Testis (tissue), 5 donors: ENCODE measurements at regions of chr6 and their contacts with region 1.

Region 1: GRCh38 chr6:33147807-33148666 is 44.2 kb downstream of the COL11A2 start:
- DNase-seq: peak; percentile 63
- H3K4me3 ChIP-seq: no peak overlapping the region
- H3K27ac ChIP-seq: no peak overlapping the region
- H3K4me1 ChIP-seq: no peaks in the 10 kb centered on the region
- H3K27me3 ChIP-seq: no peaks in the 10 kb centered on the region
- CTCF ChIP-seq: peak; percentile 64 to 83 (median 69)
- POLR2A ChIP-seq: no peak

Region 2: DNA sequence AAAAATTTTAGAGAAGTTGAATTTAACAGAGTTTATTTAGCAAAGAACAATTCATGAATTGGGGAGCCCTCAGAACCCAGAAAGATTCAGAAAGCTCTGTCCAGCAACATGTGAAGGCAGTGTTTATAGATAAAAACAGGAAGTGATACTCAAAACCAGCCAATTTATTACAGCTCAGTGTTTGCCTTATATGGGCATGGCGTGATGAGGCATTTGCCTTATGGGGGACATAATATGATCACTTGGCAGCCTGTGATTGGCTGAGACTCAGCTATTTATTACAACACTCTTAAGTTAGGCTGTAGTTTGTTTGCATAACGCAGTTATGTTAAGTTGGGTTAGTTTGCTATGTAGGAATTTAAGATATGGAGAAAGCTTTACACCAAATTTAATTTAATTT is 86.0 kb before region 1 on chr6:
- intact Hi-C with region 1: no loop called
- DNase-seq: no peak
- H3K4me3 ChIP-seq: no peak overlapping the region
- H3K27ac ChIP-seq: no peak overlapping the region
- H3K4me1 ChIP-seq: no peaks in the 10 kb centered on the region
- H3K27me3 ChIP-seq: no peaks in the 10 kb centered on the region
- CTCF ChIP-seq: no peak
- POLR2A ChIP-seq: no peak

Region 3: DNA sequence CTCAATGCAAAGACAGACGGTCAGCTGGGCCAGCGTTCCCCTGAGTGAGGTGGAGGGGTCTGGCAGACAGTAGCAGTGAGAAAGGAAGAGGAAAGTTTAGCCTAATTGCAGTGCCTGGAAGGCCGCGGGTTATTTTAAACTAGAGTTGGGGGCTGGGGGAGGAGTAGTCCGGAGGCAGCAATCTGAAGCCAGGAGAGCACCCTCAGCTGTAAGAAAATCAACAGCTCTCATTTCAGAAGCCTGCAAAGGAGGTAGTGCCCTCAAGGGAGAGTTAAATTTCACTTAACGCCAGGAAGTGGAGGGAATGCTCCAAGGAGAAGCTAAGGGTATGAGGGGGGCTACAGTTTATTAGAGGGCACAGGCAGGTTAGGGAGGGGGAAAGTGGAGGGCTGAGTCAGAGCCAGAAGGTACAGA is 87.2 kb after region 1 on chr6:
- intact Hi-C with region 1: loop called (anchors 5 kb)
- DNase-seq: no peak
- H3K4me3 ChIP-seq: no peak overlapping the region
- H3K27ac ChIP-seq: no peak overlapping the region
- H3K4me1 ChIP-seq: no peaks in the 10 kb centered on the region
- H3K27me3 ChIP-seq: no peaks in the 10 kb centered on the region
- CTCF ChIP-seq: no peak
- POLR2A ChIP-seq: no peak

Region 4: GRCh38 chr6:33513213-33513612 is 365.2 kb after region 1 on chr6:
- intact Hi-C with region 1: no loop called
- DNase-seq: no peak
- H3K4me3 ChIP-seq: no peak overlapping the region
- H3K27ac ChIP-seq: no peak overlapping the region
- H3K4me1 ChIP-seq: peaks cover 3% of the 10 kb centered on the region
- H3K27me3 ChIP-seq: no peaks in the 10 kb centered on the region
- CTCF ChIP-seq: no peak
- POLR2A ChIP-seq: no peak